ENCODE measurements at regions of chr11 and their contacts with region 1.

Region 1: GRCh38 chr11:8225589-8226036 is 38.1 kb downstream of the LMO1 start:
- DNase-seq: peak; percentile 76
- H3K4me3 Mint-ChIP-seq: no peak overlapping the region
- H3K27ac Mint-ChIP-seq: no peak overlapping the region
- H3K4me1 Mint-ChIP-seq: no peaks in the 10 kb centered on the region
- H3K27me3 Mint-ChIP-seq: no peaks in the 10 kb centered on the region

Region 2: GRCh38 chr11:8318336-8318935 is 92.8 kb after region 1 on chr11:
- CTCF ChIA-PET with region 1: no interaction called
- POLR2A ChIA-PET with region 1: no interaction called
- intact Hi-C with region 1: loop called (anchors 10 kb)
- DNase-seq: peak; percentile 16
- H3K4me3 Mint-ChIP-seq: no peak overlapping the region
- H3K27ac Mint-ChIP-seq: no peak overlapping the region
- H3K4me1 Mint-ChIP-seq: no peaks in the 10 kb centered on the region
- H3K27me3 Mint-ChIP-seq: peaks cover 12% of the 10 kb centered on the region